ENCODE measurements at regions of chrX and their contacts with region 1.

Region 1: DNA sequence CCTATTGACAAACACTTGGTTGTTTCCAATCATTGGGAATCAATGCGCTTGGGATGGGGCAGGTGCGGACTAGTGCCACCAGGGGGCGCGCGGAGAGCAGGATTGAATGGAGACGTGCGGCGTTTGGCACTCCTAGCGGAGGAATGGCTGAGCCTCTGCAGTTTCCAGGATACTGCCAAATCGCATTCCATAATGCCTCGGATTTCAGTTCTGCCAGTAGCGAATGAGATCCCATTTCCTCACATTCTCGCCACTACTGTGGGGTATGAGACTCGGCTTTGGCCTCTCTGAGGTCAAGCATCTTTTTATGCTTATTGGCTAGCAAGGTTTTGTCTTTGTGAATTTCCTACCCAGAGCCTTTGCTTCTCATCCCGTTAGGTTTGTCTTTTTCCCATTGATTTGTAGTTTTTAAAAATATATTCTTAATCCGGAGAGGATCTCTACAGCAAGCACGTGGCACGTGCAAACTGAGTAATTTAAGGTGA is 28.7 kb downstream of the CLDN34 start:
- DNase-seq: peak; percentile 82
- ATAC-seq: peak; percentile 45
- H3K4me3 Mint-ChIP-seq: no peak overlapping the region
- H3K27ac Mint-ChIP-seq: no peak overlapping the region
- H3K4me1 Mint-ChIP-seq: peaks cover 21% of the 10 kb centered on the region
- H3K27me3 Mint-ChIP-seq: no peaks in the 10 kb centered on the region

Region 2: GRCh38 chrX:9873952-9874351 is 121.9 kb before region 1 on chrX:
- CTCF ChIA-PET with region 1: no interaction called
- POLR2A ChIA-PET with region 1: no interaction called
- intact Hi-C with region 1: loop called in 1 of 2 experiments (anchors 5 kb)
- DNase-seq: peak; percentile 62
- ATAC-seq: peak; percentile 75
- H3K4me3 Mint-ChIP-seq: no peak overlapping the region
- H3K27ac Mint-ChIP-seq: no peak overlapping the region
- H3K4me1 Mint-ChIP-seq: peaks cover 14% of the 10 kb centered on the region
- H3K27me3 Mint-ChIP-seq: peaks cover 8% of the 10 kb centered on the region

Region 3: DNA sequence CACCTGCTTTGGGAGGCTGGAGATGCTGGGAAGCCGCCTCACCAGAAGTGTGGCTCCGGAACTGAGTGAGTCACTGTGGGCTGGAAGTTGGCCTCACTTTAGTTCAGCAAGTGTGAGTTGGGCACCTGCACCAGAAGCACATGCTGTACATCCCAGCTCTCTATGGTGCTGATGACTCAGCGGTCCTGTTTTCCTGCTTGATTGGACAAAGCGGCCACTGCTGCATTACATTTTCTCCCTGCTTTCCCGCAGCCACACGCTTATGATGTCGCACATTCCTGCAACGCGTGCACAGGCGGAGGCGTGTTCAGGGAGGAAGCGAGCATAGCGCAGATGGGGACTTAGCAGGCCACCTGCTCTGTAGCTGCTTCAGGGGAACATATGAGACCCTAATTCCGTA is 55.5 kb before region 1 on chrX:
- CTCF ChIA-PET with region 1: no interaction called
- POLR2A ChIA-PET with region 1: no interaction called
- intact Hi-C with region 1: no loop called
- DNase-seq: no peak
- ATAC-seq: no peak
- H3K4me3 Mint-ChIP-seq: no peak overlapping the region
- H3K27ac Mint-ChIP-seq: no peak overlapping the region
- H3K4me1 Mint-ChIP-seq: peaks cover 14% of the 10 kb centered on the region
- H3K27me3 Mint-ChIP-seq: peaks cover 22% of the 10 kb centered on the region

Region 4: DNA sequence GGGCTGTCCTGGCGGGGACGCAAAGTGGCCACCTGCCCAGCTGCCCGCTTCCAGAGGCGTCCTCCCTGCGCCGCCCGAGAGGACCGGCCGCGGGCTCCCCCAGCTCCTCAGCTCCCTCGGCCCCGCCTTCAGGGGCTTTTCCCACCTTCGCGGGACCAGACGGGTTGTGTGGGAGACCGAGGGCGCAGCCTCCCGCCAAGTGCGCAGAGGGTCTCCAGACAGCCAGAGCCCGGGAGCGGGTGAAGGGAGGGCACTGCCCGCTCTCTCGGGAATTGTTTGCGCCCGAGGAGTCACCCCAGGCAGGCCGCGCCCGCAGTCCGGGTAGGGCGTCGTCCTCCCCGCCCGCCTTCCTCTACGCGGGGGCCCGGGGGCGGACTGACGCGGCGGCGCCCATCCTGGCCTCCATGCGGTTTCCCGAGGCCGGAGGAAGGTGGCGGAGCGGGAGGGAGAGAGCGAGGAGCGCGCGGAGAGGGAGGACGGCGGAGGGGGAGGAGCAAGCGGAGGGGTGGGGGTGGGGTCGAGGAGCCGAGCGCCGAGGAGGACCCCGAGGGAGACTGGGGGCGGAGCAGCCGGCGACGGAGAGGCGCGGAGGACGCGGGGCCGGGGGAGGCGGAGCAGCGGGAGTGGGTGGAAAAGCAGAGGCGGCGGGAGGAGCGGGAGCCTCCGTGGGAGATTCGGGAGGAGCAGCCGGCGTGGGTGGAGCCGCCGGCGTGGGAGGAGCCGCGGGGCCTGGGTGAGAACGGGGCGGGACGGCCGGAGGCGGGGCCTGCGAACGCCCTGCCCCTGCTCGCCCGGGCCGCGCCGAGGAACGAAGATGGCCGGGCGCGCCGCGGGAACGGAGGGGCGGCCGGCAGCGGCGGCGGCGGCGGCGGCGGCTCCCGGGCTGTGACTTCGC is 18.8 kb after region 1 on chrX:
- CTCF ChIA-PET with region 1: interaction called, 6 read pairs
- POLR2A ChIA-PET with region 1: interaction called, 3 read pairs
- intact Hi-C with region 1: loop called in 1 of 2 experiments (anchors 1 kb)
- DNase-seq: peak; percentile 83
- ATAC-seq: peak; percentile 89
- H3K4me3 Mint-ChIP-seq: peak overlapping the region; percentile 60
- H3K27ac Mint-ChIP-seq: peak overlapping the region; percentile 58
- H3K4me1 Mint-ChIP-seq: peaks cover 37% of the 10 kb centered on the region
- H3K27me3 Mint-ChIP-seq: peaks cover 6% of the 10 kb centered on the region

Region 5: GRCh38 chrX:10111364-10112148 is 115.7 kb after region 1 on chrX:
- CTCF ChIA-PET with region 1: interaction called, 100 read pairs
- POLR2A ChIA-PET with region 1: no interaction called
- intact Hi-C with region 1: no loop called
- DNase-seq: peak; percentile 49
- ATAC-seq: peak; percentile 43
- H3K4me3 Mint-ChIP-seq: no peak overlapping the region
- H3K27ac Mint-ChIP-seq: peak overlapping the region; percentile 86
- H3K4me1 Mint-ChIP-seq: peaks cover 45% of the 10 kb centered on the region
- H3K27me3 Mint-ChIP-seq: no peaks in the 10 kb centered on the region

Region 6: GRCh38 chrX:10360116-10360515 is 364.2 kb after region 1 on chrX:
- CTCF ChIA-PET with region 1: no interaction called
- POLR2A ChIA-PET with region 1: no interaction called
- intact Hi-C with region 1: no loop called
- DNase-seq: no peak
- ATAC-seq: no peak
- H3K4me3 Mint-ChIP-seq: no peak overlapping the region
- H3K27ac Mint-ChIP-seq: no peak overlapping the region
- H3K4me1 Mint-ChIP-seq: no peaks in the 10 kb centered on the region
- H3K27me3 Mint-ChIP-seq: no peaks in the 10 kb centered on the region

Measured in activated CD4-positive, alpha-beta T cell treated with anti-CD3 and anti-CD28 coated beads for 36 hours (primary cell).